ENCODE measurements at regions of chr3 and their contacts with region 1.

Region 1: DNA sequence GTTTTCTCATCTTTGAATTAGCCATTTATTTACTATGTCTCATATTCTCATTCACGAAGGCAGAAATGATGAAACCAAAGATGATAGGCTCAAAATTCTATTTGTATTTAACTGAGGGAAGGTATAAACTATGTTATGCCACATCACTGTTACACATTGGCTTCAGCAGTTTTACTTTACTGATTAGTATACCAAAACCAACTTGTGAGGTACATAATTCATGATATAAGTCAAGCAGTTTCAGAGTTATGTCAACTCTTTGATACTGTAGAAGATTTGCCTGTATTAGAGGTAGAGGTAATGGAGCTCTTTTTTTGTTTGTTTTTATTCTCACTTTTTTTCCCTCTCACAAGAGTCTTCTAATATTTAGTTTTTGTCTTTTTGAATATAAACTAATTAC is 22.9 kb downstream of the CHMP2B start:
- DNase-seq: no peak
- H3K4me3 ChIP-seq: no peak overlapping the region
- H3K27ac ChIP-seq: no peak overlapping the region
- H3K4me1 ChIP-seq: no peaks in the 10 kb centered on the region
- H3K27me3 ChIP-seq: no peaks in the 10 kb centered on the region
- CTCF ChIP-seq: no peak

Region 2: GRCh38 chr3:86774082-86774691 is 475.8 kb before region 1 on chr3:
- CTCF ChIA-PET with region 1: no interaction called
- POLR2A ChIA-PET with region 1: no interaction called
- intact Hi-C with region 1: loop called (anchors 10 kb)
- DNase-seq: peak in 1 of 2 experiments; percentile 44
- H3K4me3 ChIP-seq: no peak overlapping the region
- H3K27ac ChIP-seq: no peak overlapping the region
- H3K4me1 ChIP-seq: no peaks in the 10 kb centered on the region
- H3K27me3 ChIP-seq: no peaks in the 10 kb centered on the region
- CTCF ChIP-seq: peak; percentile 81